ENCODE measurements at regions of chr1 and their contacts with region 1.

Region 1: GRCh38 chr1:92749024-92749634 is 35.8 kb downstream of the EVI5 start:
- DNase-seq: peak; percentile 72
- ATAC-seq: peak; percentile 66
- H3K4me3 ChIP-seq: no peak overlapping the region
- H3K27ac ChIP-seq: no peak overlapping the region
- H3K4me1 ChIP-seq: peaks cover 16% of the 10 kb centered on the region
- H3K27me3 ChIP-seq: no peaks in the 10 kb centered on the region
- CTCF ChIP-seq: peak; percentile 83

Region 2: DNA sequence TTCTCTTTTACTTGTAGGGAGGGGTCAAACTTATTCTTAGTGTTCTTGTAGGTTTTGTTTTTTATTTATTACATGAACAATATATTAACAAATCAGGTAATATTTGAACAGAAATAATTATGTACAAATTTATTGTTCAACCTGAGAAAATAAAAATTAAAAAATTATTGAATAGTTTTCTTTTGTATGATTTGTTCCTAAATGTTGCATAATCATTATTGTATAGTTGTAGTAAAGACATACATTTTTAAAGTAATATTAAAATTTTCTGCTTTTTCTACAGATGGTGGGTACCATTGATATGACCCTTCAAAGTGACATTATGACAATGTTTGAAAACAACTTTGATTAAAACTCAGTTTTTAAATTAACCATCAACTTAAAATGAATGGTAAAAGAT is 735.2 kb before region 1 on chr1:
- CTCF ChIA-PET with region 1: no interaction called
- POLR2A ChIA-PET with region 1: interaction called, 10 read pairs
- intact Hi-C with region 1: no loop called
- DNase-seq: no peak
- ATAC-seq: no peak
- H3K4me3 ChIP-seq: no peak overlapping the region
- H3K27ac ChIP-seq: no peak overlapping the region
- H3K4me1 ChIP-seq: no peaks in the 10 kb centered on the region
- H3K27me3 ChIP-seq: no peaks in the 10 kb centered on the region
- CTCF ChIP-seq: no peak

Region 3: DNA sequence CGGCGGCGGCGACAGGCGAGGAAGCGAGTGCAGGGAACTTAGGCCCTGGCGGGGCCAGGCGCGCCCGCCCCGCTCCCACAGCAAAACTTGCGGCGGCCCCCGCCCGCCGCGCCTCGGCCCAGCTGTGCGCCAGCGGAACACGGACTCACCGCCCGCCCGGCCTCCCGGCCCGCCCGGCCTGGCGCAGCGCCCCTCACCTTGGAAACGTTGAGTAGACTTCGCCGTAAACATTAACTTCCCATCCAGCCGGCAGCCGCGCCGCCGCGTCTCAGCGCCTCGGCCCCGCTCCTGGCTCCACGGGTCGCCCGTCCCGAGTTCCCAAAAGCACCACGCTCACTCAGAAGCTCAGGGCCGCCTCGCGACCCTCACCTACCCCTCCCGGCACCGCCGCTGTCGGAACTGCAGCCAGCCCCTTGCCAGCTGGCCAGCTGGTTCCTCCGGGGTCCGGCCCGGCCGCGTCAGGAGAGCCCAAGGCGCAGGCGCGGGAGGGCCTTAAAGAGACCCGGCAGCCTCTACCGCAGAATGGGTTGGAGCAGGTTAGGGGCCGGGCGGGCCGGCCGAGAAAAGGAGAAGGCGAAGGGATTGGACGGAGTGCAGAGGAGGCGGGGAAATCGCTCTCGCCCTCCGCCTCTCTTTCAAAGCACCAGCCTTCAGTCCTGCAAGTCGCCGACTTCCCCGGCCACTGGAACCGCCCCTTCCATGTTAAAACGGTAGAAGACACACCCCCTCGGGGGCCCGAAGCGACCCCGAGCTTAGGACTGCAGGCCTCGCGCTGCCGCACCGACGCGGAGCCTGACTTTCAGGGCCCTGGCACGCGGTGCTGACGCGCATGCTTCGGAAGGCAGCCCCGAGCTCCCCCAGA is 35.7 kb after region 1 on chr1 and contains the start of gene EVI5:
- CTCF ChIA-PET with region 1: interaction called, 10 read pairs
- POLR2A ChIA-PET with region 1: interaction called, 8 read pairs
- intact Hi-C with region 1: loop called (anchors 2 kb)
- DNase-seq: peak; percentile 97
- ATAC-seq: peak; percentile 93
- H3K4me3 ChIP-seq: peak within 1 kb of the TSS; percentile 94
- H3K27ac ChIP-seq: peak within 1 kb of the TSS; percentile 49
- H3K4me1 ChIP-seq: peaks cover 11% of the 10 kb centered on the region
- H3K27me3 ChIP-seq: no peaks in the 10 kb centered on the region
- CTCF ChIP-seq: no peak
- total RNA-seq, gene EVI5: 38.2 and 65.5 TPM in 2 replicates

Region 4: DNA sequence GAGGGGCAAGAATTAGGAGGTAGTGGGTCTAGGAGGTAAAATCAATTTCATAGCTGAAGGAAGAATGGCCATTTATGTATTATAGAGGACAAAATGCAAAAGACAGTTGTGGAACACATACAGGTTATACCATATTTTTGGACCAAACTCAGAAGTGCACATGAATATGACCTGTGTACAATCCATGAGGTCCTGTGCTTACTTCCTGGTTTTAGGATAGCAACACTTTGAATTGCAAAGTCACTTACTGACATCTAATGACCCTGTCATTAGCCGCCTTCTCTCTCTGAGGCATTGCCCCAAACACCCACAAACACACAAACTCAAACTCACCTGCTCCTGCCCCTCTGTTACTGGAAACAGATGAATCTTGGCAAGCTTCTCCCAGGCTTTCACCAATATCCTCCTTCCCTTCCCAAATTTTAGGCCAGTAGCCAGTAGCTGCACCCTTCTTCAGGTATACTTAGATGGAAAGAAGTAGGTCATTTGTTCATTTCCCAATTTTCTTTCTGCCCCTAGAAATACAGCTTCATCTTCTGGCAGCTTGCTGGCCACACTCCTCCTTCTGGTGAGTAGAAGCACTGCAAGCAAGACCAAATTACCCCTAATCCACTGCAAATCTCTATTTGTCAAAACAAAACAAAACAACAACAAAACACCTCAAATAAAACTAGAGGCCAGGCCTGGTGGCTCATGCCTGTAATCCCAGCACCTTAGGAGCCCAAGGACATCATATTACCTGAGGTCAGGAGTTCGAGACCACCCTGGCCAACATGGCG is 69.0 kb after region 1 on chr1:
- CTCF ChIA-PET with region 1: interaction called, 21 read pairs
- POLR2A ChIA-PET with region 1: no interaction called
- intact Hi-C with region 1: loop called (anchors 1 kb)
- DNase-seq: peak; percentile 59
- ATAC-seq: no peak
- H3K4me3 ChIP-seq: no peak overlapping the region
- H3K27ac ChIP-seq: no peak overlapping the region
- H3K4me1 ChIP-seq: peaks cover 18% of the 10 kb centered on the region
- H3K27me3 ChIP-seq: no peaks in the 10 kb centered on the region
- CTCF ChIP-seq: peak; percentile 75

Region 5: GRCh38 chr1:92831762-92832536 is 82.8 kb after region 1 on chr1 and contains the start of gene RPL5:
- CTCF ChIA-PET with region 1: interaction called, 6 read pairs
- POLR2A ChIA-PET with region 1: no interaction called
- intact Hi-C with region 1: loop called (anchors 5 kb)
- DNase-seq: peak; percentile 98
- ATAC-seq: peak; percentile 93
- H3K4me3 ChIP-seq: peak within 1 kb of the TSS; percentile 98
- H3K27ac ChIP-seq: peak within 1 kb of the TSS; percentile 48
- H3K4me1 ChIP-seq: peaks cover 20% of the 10 kb centered on the region
- H3K27me3 ChIP-seq: no peaks in the 10 kb centered on the region
- CTCF ChIP-seq: peak; percentile 89
- total RNA-seq, gene RPL5: 1,246 and 1,285 TPM in 2 replicates

Region 6: DNA sequence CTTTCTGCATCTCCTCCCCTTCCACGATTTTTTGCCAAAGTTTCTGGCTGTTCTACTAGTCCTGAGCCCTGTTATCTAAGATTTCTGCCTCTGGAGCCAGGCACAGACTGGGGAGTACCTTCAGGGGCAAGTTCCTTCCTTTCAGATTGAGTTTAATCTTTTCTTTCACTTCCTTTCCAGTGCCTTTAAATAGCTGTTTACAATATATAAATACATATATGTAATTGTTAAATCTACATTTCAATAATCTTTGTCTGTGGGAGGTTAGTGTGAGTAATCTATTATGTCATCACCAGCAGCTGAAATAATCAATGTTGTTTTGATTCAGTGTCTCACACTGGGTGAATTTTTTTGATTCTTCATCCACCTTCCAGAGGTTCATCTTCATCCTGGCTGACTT is 180.3 kb after region 1 on chr1:
- CTCF ChIA-PET with region 1: no interaction called
- POLR2A ChIA-PET with region 1: no interaction called
- intact Hi-C with region 1: no loop called
- DNase-seq: peak; percentile 6
- ATAC-seq: no peak
- H3K4me3 ChIP-seq: no peak overlapping the region
- H3K27ac ChIP-seq: no peak overlapping the region
- H3K4me1 ChIP-seq: peaks cover 15% of the 10 kb centered on the region
- H3K27me3 ChIP-seq: no peaks in the 10 kb centered on the region
- CTCF ChIP-seq: no peak

Region 7: GRCh38 chr1:93155335-93155734 is 406.2 kb after region 1 on chr1:
- CTCF ChIA-PET with region 1: no interaction called
- POLR2A ChIA-PET with region 1: no interaction called
- intact Hi-C with region 1: no loop called
- DNase-seq: peak; percentile 12
- ATAC-seq: no peak; the same call in 1 of the 2 replicates
- H3K4me3 ChIP-seq: no peak overlapping the region
- H3K27ac ChIP-seq: no peak overlapping the region
- H3K4me1 ChIP-seq: no peaks in the 10 kb centered on the region
- H3K27me3 ChIP-seq: no peaks in the 10 kb centered on the region
- CTCF ChIP-seq: no peak